ENCODE measurements at regions of chr3 and their contacts with region 1.

Region 1: DNA sequence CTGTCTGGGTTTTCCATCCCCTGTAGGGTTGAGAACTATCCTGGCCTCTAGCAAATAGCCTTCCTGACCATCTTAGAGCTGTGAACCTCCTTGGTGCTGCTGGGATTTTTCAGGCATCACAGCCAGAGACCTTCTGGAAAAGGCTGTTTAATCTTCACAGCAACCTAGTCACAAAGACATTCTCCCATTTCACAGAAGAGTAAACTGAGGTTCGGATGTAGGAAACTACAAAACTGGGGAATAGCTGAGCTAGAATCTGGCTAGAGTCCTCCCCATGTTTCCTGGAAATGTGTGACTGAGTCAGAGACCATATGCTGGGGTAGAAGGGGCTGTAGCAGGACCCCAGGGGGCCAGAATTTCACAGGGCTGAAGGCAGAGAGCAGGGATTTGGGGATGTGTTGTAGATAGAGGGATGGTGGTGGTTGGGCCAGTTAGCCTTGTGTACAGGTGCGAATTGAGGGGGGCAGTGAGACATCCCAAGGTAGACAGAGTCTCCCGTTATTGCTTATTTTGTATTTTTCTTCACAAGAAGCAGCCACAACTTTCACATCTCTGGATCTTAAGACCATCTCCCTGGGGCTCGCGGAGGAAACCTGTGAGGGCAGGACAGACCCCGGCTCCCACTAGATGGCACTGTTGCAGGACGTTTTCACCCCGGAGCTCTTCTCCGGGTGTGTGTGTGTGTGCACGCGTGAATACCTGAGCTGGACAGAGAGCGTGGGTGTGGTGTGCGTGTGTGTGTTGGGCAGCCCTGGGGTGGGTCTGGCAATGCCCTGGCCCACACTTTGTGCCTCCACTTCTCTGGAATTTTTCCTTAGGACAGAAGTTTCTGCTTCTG is 66.9 kb upstream of the PRR23C start:
- DNase-seq: peak; percentile 64 to 80 (median 70)
- ATAC-seq: peak; percentile 91
- H3K4me3 ChIP-seq: no peak overlapping the region
- H3K27ac ChIP-seq: no peak overlapping the region
- H3K4me1 ChIP-seq: peaks cover 0 to 5% of the 10 kb centered on the region in 2 experiments; a peak in 2 of 5 replicates
- H3K27me3 ChIP-seq: peaks cover 0 to 6% of the 10 kb centered on the region in 2 experiments; a peak in 3 of 5 replicates
- CTCF ChIP-seq: peak; percentile 83 to 89 (median 84)
- EP300 ChIP-seq: no peak
- POLR2A ChIP-seq: no peak
- RAD21 ChIP-seq: peak; percentile 88 to 92

Region 2: GRCh38 chr3:139187650-139188049 is 76.0 kb after region 1 on chr3:
- CTCF ChIA-PET with region 1: no interaction called
- POLR2A ChIA-PET with region 1: interaction called, 3 read pairs
- in situ Hi-C with region 1: no loop called
- intact Hi-C with region 1: loop called (anchors 5 kb)
- DNase-seq: peak; percentile 42 to 64 (median 62)
- ATAC-seq: peak; percentile 96
- H3K4me3 ChIP-seq: no peak overlapping the region
- H3K27ac ChIP-seq: no peak overlapping the region
- H3K4me1 ChIP-seq: no peaks in the 10 kb centered on the region
- H3K27me3 ChIP-seq: no peaks in the 10 kb centered on the region
- CTCF ChIP-seq: peak; percentile 16 to 35 (median 24); a peak in 2 of 6 replicates
- EP300 ChIP-seq: no peak
- POLR2A ChIP-seq: no peak
- RAD21 ChIP-seq: peak; percentile 9 to 61; a peak in 2 of 4 replicates

Region 3: GRCh38 chr3:139202226-139202958 is 90.8 kb after region 1 on chr3:
- CTCF ChIA-PET with region 1: no interaction called
- POLR2A ChIA-PET with region 1: no interaction called
- in situ Hi-C with region 1: no loop called
- intact Hi-C with region 1: loop called (anchors 2 kb)
- DNase-seq: peak; percentile 36 to 80 (median 60)
- ATAC-seq: peak; percentile 96
- H3K4me3 ChIP-seq: no peak overlapping the region
- H3K27ac ChIP-seq: no peak overlapping the region; the same call in 2 of the 3 replicates
- H3K4me1 ChIP-seq: peaks cover 0 to 17% of the 10 kb centered on the region in 2 experiments; a peak in 3 of 5 replicates
- H3K27me3 ChIP-seq: no peaks in the 10 kb centered on the region
- CTCF ChIP-seq: peak; percentile 71 to 75 (median 71)
- EP300 ChIP-seq: no peak
- POLR2A ChIP-seq: no peak
- RAD21 ChIP-seq: peak; percentile 85 to 86

Region 4: GRCh38 chr3:139227165-139227564 is 115.6 kb after region 1 on chr3:
- CTCF ChIA-PET with region 1: no interaction called
- POLR2A ChIA-PET with region 1: no interaction called
- in situ Hi-C with region 1: no loop called
- intact Hi-C with region 1: no loop called
- DNase-seq: no peak
- ATAC-seq: no peak
- H3K4me3 ChIP-seq: no peak overlapping the region
- H3K27ac ChIP-seq: no peak overlapping the region
- H3K4me1 ChIP-seq: peaks cover 2 to 8% of the 10 kb centered on the region in 2 experiments; a peak in 3 of 5 replicates
- H3K27me3 ChIP-seq: no peaks in the 10 kb centered on the region
- CTCF ChIP-seq: no peak
- EP300 ChIP-seq: no peak
- POLR2A ChIP-seq: no peak
- RAD21 ChIP-seq: no peak